GM18951 (cell line): ENCODE measurements at regions of chr4 and their contacts with region 1.

Region 1: DNA sequence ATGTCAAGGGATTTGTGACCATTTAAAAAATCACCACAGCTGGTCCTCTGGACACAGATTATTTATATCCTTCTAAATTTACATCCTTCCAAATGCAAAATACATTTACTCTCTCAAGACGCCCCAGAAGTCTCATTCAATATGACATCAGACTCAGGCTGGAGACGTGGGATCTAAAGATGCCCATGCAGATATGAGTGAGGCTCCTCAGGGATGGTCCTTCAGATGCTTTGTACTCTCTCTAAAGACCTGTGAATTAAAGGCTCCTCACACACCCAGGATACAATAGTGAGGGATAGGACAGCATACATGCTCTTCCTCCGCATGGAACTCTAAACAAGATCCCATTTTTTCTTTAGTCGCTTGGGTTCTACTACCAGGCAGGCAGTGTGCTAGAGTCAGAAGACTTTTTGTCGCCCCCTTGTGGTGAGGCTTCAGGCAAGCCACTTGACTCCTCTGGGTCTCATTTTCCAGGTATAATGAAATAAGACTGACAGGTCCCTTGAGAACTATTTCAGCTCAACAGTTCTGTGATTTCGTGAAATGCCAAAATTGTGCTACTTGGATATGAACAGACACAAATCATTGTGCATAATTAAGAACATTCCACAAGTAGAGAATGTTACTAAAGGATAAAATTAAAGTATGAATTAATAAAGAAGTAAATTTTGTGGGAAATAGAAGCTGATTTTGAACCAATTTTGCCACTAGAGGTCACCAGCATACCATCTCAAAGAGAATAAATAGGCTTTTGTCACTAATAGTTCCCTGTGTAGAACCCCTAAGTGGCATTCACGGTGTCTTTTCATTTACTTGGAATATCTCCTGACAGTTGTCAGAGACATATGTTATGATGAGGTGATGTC is 13.7 kb upstream of the SCOC start:
- POLR2A ChIP-seq: no peak

Region 2: DNA sequence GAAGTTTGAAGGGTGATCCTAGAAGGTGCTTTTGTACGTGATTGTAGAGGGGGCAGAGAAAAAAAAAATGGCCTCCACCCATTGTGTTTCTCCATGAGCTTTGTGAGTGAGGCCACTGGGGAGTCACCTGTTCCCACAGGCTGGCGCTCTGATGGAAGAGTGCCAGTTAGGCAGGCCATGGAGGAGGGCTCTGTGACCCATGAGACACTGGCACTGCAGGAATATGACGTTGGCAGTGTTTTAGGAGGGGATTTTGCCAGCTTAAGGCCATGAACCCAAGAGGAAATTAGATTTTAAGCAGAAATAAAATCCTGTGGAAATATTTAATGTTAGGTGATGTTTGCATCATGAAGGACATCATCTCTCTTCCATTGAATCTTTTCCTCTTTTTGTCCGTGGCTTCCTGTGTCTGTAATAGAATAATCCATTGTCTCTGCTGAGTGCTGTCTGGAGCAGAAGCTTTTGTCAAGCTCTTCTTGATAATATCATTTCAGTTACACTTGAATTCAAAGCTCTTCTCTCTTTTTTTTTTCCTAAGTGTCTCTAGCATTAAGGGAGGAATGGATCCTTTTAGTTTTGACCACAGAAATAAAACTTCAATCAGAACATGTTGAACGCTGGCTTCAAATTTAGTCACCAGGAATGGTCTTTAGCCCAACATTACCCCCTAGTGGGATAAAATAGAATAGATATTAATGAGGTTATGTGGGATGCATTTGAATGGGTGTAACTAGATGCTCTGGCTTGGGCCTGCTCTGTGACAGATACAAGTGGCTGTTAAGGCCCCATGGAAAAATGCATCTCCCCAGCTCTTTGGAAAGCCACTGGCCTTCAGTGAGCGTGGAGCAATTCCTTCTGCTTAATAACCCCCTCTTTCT is 250.0 kb after region 1 on chr4:
- in situ Hi-C with region 1: loop called (anchors 25 kb)
- POLR2A ChIP-seq: no peak

Region 3: DNA sequence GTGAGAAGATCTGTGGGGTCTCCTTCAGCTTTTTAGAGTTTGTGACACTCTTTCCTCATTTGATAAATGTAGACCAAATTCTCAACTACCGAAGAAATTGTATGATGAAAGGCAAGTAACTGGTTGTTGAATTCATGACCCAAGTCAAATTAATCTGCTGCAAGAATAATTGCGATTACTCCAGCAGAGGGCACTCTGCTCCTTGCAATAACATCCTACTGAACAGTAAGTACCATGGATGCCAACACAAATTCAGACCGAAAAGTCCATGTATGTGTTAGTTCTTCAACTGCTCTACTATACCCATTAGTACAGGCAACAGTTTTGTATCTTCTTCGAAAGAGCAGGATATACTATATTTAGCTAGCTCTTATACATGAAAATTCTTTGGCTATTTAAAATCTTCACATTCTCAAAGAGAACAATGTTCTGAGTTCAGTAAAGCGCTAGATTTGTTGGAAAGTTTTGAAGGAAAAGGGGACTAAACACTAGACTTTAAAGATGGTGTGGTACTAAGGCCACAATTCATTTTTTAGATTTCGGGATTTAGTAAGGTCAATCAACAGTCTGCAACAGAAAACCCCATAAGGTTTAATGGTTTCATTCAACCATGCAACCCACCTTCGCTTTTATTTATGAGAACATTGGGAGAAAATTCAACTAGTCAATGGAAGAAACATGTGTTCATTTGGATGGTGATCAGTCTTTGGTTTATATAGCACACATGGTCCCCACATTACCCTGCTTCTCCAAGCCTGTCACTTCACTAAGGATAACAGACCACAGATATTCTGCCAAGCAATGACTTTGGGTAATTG is 501.8 kb after region 1 on chr4:
- in situ Hi-C with region 1: loop called (anchors 25 kb)
- POLR2A ChIP-seq: no peak